B cell (primary cell): ENCODE measurements at regions of chr13 and their contacts with region 1.

Region 1: GRCh38 chr13:49690992-49691886 is at the start of gene EBPL:
- DNase-seq: peak; percentile 87
- ATAC-seq: peak; percentile 99
- H3K4me3 ChIP-seq: peak within 1 kb of the TSS; percentile 56 to 82 (median 78)
- H3K4me3 Mint-ChIP-seq: peak within 1 kb of the TSS; percentile 88
- H3K27ac ChIP-seq: peak within 1 kb of the TSS; percentile 19 to 73
- H3K27ac Mint-ChIP-seq: peak within 1 kb of the TSS; percentile 42
- H3K4me1 ChIP-seq: peaks cover 9 to 13% of the 10 kb centered on the region in 2 donors
- H3K4me1 Mint-ChIP-seq: peaks cover 26% of the 10 kb centered on the region
- H3K27me3 ChIP-seq: no peaks in the 10 kb centered on the region
- H3K27me3 Mint-ChIP-seq: no peaks in the 10 kb centered on the region
- CTCF ChIP-seq: no peak
- total RNA-seq, gene EBPL: 16.2 and 20.1 TPM in 2 replicates

Region 2: GRCh38 chr13:49443704-49444523 is 247.3 kb before region 1 on chr13 and contains the starts of genes CAB39L and SETDB2:
- CTCF ChIA-PET with region 1: no interaction called
- POLR2A ChIA-PET with region 1: no interaction called
- intact Hi-C with region 1: loop called (anchors 1 kb)
- DNase-seq: peak; percentile 100
- ATAC-seq: peak; percentile 89
- H3K4me3 ChIP-seq: peak within 1 kb of the TSS; percentile 63 to 98 (median 81)
- H3K4me3 Mint-ChIP-seq: peak within 1 kb of the TSS; percentile 96
- H3K27ac ChIP-seq: peak within 1 kb of the TSS; percentile 97
- H3K27ac Mint-ChIP-seq: peak within 1 kb of the TSS; percentile 99
- H3K4me1 ChIP-seq: peaks cover 33 to 51% of the 10 kb centered on the region in 2 donors
- H3K4me1 Mint-ChIP-seq: peaks cover 71% of the 10 kb centered on the region
- H3K27me3 ChIP-seq: no peaks in the 10 kb centered on the region
- H3K27me3 Mint-ChIP-seq: no peaks in the 10 kb centered on the region
- CTCF ChIP-seq: peak; percentile 34
- total RNA-seq, gene CAB39L: 8.9 and 9.6 TPM in 2 replicates
- total RNA-seq, gene SETDB2: 38.2 and 40.1 TPM in 2 replicates

Region 3: DNA sequence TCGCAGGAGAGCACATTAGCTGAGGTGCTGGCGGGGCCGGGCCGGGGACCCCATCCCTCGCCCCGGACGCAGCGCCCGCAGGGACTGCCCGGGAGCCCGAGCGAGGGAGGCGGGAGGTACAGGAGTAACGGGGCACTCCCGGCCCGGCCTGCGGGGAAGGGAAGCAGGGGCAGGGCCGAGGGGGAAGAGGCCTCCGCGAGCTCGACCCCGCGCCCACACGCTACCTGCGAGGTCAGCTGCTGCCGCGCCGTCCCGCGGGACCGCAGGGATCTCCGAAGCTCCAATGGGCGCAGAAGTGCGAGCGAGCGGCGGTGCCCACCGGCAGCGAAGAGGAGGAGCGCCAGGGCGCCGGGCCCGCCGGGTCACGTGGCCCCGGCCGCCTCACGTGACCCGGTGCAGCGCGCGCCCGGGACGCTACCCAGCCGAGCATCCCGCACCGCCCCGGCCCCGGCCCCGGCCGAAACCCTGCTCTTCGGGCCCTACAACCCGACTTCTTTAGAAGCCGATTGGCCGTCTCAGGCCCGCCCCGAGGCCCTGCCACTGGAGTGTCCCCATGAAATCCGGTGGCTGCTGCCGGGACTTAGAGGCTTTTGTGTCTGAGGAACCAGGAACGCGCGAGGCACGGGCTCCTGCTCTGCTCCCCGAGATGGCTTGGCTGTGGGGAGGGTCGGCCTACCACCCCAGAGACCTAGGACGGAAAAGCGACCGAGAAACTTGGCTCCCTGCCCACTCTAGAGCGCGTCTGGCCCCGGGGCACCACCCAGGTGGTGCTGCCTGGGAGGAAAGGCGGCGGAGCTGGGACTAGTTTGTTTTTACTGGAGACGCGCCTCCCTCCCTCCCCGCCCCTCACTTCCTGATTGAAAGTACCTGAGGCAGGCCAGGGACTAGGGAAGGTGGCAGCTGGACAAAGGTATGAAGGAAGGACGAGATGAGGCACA is 105.8 kb before region 1 on chr13 and contains the start of gene RCBTB1:
- CTCF ChIA-PET with region 1: no interaction called
- POLR2A ChIA-PET with region 1: no interaction called
- intact Hi-C with region 1: loop called (anchors 1 kb)
- DNase-seq: peak; percentile 89
- ATAC-seq: peak; percentile 88
- H3K4me3 ChIP-seq: peak within 1 kb of the TSS; percentile 85 to 91 (median 87)
- H3K4me3 Mint-ChIP-seq: peak within 1 kb of the TSS; percentile 96
- H3K27ac ChIP-seq: peak within 1 kb of the TSS; percentile 88 to 90
- H3K27ac Mint-ChIP-seq: peak within 1 kb of the TSS; percentile 92
- H3K4me1 ChIP-seq: peaks cover 17 to 23% of the 10 kb centered on the region in 2 donors
- H3K4me1 Mint-ChIP-seq: peaks cover 29% of the 10 kb centered on the region
- H3K27me3 ChIP-seq: no peaks in the 10 kb centered on the region
- H3K27me3 Mint-ChIP-seq: no peaks in the 10 kb centered on the region
- CTCF ChIP-seq: no peak
- total RNA-seq, gene RCBTB1: 35.2 and 42.1 TPM in 2 replicates

Region 4: DNA sequence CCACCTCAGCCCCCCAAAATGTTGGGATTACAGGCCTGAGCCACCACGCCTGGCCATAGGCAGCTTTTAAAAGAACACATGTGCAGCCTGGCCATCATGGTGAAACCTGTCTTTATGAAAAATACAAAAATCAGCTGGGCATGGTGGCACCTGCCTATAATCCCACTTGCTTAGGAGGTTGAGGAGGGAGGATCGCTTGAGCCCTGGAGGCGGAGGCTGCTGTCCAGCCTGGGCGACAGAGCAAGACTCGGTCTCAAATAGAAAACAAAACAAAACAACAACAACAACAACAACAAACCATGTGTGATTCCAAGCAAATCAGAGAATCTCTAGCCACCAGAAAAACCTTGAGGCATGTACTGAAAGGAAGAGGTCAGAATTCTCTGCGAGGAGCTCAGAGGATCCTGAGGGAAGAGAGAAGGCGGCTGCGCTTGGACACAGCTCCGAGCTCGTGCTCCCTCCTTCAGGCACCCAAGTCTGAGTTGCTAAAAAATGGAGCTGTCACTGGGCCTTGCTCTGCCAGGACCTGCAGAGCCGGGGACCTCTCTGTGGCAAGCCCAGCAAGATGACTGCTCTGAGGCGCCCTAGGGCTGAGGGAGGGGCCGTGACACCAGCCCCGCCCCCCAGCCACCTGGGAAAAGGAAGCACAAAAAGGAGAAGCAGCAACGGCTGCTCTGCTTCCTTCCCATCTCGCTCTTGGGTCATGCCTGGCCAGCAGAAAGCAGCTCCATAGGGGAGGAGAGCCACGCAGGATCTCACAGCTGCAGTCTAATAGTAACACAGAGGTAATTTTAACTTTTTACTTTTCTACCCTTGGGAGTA is 63.2 kb before region 1 on chr13 and contains the start of gene ARL11:
- CTCF ChIA-PET with region 1: no interaction called
- POLR2A ChIA-PET with region 1: no interaction called
- intact Hi-C with region 1: loop called (anchors 5 kb)
- DNase-seq: peak; percentile 88
- ATAC-seq: peak; percentile 99
- H3K4me3 ChIP-seq: peak within 1 kb of the TSS; percentile 79 to 100 (median 90)
- H3K4me3 Mint-ChIP-seq: peak within 1 kb of the TSS; percentile 99
- H3K27ac ChIP-seq: peak within 1 kb of the TSS; percentile 61 to 78
- H3K27ac Mint-ChIP-seq: peak within 1 kb of the TSS; percentile 94
- H3K4me1 ChIP-seq: peaks cover 17 to 21% of the 10 kb centered on the region in 2 donors
- H3K4me1 Mint-ChIP-seq: peaks cover 44% of the 10 kb centered on the region
- H3K27me3 ChIP-seq: no peaks in the 10 kb centered on the region
- H3K27me3 Mint-ChIP-seq: no peaks in the 10 kb centered on the region
- CTCF ChIP-seq: no peak
- total RNA-seq, gene ARL11: 17.9 and 21.4 TPM in 2 replicates

Region 5: DNA sequence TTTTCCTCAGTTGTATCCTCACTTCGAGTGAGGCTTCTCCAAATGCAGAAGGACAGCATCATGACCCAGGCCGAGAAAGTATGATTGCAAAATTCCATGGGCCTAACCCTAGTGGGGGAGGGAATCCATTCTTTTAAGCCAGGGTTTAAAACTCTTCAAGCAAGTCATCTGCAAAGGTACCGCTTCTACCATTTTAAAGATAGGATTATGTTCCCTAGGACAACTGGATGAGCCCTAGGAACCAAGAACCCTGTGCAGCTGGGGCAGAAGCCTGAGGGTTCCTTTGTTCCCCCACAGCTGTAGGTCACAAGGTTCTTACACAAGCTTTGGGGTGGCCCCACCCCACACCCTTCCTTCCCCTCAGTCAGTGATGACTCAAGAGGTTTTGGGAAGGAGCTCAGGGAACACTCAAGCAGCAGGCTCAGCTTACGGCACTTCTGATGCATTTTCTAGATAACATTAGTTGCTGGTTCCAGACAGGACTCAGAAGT is 49.4 kb before region 1 on chr13:
- CTCF ChIA-PET with region 1: no interaction called
- POLR2A ChIA-PET with region 1: interaction called, 4 read pairs
- intact Hi-C with region 1: loop called (anchors 5 kb)
- DNase-seq: no peak
- ATAC-seq: no peak
- H3K4me3 ChIP-seq: no peak overlapping the region
- H3K4me3 Mint-ChIP-seq: peak overlapping the region; percentile 39
- H3K27ac ChIP-seq: no peak overlapping the region
- H3K27ac Mint-ChIP-seq: peak overlapping the region; percentile 26
- H3K4me1 ChIP-seq: peaks cover 13 to 15% of the 10 kb centered on the region in 2 donors
- H3K4me1 Mint-ChIP-seq: peaks cover 37% of the 10 kb centered on the region
- H3K27me3 ChIP-seq: no peaks in the 10 kb centered on the region
- H3K27me3 Mint-ChIP-seq: no peaks in the 10 kb centered on the region
- CTCF ChIP-seq: no peak

Region 6: DNA sequence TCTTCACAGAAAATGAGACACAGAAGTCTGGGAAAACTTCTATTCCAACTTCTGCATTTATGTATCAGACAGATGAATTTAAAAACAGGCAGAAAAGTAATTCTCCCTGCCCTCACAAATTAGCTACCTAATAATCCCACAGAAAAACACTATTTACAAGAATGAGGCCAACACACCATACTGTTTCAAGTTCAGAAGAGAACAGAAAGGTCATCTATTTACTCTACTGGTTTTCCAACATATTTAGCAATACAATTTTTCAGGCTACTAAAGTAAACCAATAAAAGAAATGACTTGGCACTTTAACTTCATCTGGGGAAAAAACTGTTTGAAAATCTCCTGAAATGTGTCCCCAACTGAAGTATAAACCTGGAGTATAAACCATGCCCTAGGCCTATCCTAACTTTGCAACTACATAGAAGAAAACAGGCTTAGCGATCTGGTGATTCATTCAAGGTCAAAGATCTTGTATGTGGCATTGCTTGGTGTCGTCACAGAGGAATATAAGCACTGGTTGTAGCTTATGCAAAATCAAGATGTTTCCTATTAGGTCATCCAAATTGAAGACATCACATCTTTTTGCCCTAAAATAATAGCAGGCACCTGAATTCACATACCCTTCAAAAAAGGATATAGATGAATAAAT is 20.1 kb after region 1 on chr13:
- CTCF ChIA-PET with region 1: no interaction called
- POLR2A ChIA-PET with region 1: interaction called, 12 read pairs
- intact Hi-C with region 1: no loop called
- DNase-seq: no peak
- ATAC-seq: no peak
- H3K4me3 ChIP-seq: no peak overlapping the region
- H3K4me3 Mint-ChIP-seq: no peak overlapping the region
- H3K27ac ChIP-seq: no peak overlapping the region
- H3K27ac Mint-ChIP-seq: no peak overlapping the region
- H3K4me1 ChIP-seq: no peaks in the 10 kb centered on the region
- H3K4me1 Mint-ChIP-seq: no peaks in the 10 kb centered on the region
- H3K27me3 ChIP-seq: no peaks in the 10 kb centered on the region
- H3K27me3 Mint-ChIP-seq: no peaks in the 10 kb centered on the region
- CTCF ChIP-seq: no peak

Region 7: GRCh38 chr13:49792550-49793324 is 101.5 kb after region 1 on chr13 and contains the start of gene KPNA3:
- CTCF ChIA-PET with region 1: interaction called, 7 read pairs
- POLR2A ChIA-PET with region 1: interaction called, 8 read pairs
- intact Hi-C with region 1: loop called (anchors 1 kb)
- DNase-seq: peak; percentile 97
- ATAC-seq: peak; percentile 87
- H3K4me3 ChIP-seq: peak within 1 kb of the TSS; percentile 79 to 88 (median 80)
- H3K4me3 Mint-ChIP-seq: peak within 1 kb of the TSS; percentile 97
- H3K27ac ChIP-seq: peak within 1 kb of the TSS; percentile 85 to 91
- H3K27ac Mint-ChIP-seq: peak within 1 kb of the TSS; percentile 99
- H3K4me1 ChIP-seq: peaks cover 20 to 21% of the 10 kb centered on the region in 2 donors
- H3K4me1 Mint-ChIP-seq: peaks cover 34% of the 10 kb centered on the region
- H3K27me3 ChIP-seq: no peaks in the 10 kb centered on the region
- H3K27me3 Mint-ChIP-seq: peaks cover 4% of the 10 kb centered on the region
- CTCF ChIP-seq: no peak
- total RNA-seq, gene KPNA3: 19.0 and 19.7 TPM in 2 replicates